ENCODE measurements at regions of chr2 and their contacts with region 1.

Region 1: GRCh38 chr2:118882709-118883210 is 35.3 kb upstream of the EN1 start:
- DNase-seq: peak; percentile 79
- H3K4me3 ChIP-seq: peak overlapping the region; percentile 4 to 41 (median 12)
- H3K27ac ChIP-seq: no peak overlapping the region
- H3K4me1 ChIP-seq: peaks cover 0 to 4% (median 0%) of the 10 kb centered on the region in 4 donors
- H3K27me3 ChIP-seq: peaks cover 26% of the 10 kb centered on the region
- CTCF ChIP-seq: peak; percentile 84 to 95 (median 89)
- EP300 ChIP-seq: no peak
- POLR2A ChIP-seq: no peak

Region 2: DNA sequence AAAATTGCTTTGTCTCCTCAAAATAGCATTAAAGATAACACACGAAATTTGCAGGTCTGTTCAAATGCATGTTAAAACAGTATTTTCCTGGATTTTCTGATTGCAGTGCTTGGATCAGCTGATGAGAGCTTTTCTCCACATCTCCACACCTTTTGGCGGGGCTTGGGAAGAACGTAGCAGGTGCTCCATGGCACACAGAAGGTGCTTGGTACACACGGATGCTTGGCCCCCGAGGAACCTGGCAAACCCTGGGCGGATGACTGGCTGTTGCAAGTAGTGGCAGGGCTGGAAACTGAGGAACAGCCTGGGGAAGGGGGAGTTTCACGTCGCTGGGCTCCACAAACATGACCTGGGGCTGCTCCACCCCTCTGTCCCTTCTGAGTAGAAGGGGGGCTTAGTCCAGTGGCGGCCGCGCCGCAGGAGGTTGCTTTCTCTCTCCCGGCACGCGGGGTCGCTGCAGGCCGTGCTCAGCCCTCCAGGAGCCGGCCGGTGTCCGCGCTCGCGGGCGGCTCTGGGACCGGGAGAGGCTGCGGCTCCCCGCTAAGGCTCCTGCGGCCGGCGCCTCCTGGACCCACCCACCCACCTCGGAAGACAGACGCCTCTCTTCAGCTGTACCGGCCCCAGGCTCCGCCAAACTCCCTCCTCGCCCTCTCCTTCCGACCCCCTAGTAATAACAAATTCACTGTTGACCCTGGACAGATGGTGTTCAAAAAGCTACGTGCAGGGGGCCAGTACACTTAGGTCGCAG is 128.6 kb after region 1 on chr2:
- in situ Hi-C with region 1: loop called in 2 of 4 experiments (anchors 10 to 25 kb)
- intact Hi-C with region 1: no loop called
- DNase-seq: peak; percentile 39
- H3K4me3 ChIP-seq: no peak overlapping the region
- H3K27ac ChIP-seq: no peak overlapping the region
- H3K4me1 ChIP-seq: peaks cover 0 to 4% (median 1%) of the 10 kb centered on the region in 4 donors
- H3K27me3 ChIP-seq: peaks cover 48% of the 10 kb centered on the region
- CTCF ChIP-seq: peak; percentile 26 to 49 (median 40)
- EP300 ChIP-seq: no peak
- POLR2A ChIP-seq: no peak

Region 3: DNA sequence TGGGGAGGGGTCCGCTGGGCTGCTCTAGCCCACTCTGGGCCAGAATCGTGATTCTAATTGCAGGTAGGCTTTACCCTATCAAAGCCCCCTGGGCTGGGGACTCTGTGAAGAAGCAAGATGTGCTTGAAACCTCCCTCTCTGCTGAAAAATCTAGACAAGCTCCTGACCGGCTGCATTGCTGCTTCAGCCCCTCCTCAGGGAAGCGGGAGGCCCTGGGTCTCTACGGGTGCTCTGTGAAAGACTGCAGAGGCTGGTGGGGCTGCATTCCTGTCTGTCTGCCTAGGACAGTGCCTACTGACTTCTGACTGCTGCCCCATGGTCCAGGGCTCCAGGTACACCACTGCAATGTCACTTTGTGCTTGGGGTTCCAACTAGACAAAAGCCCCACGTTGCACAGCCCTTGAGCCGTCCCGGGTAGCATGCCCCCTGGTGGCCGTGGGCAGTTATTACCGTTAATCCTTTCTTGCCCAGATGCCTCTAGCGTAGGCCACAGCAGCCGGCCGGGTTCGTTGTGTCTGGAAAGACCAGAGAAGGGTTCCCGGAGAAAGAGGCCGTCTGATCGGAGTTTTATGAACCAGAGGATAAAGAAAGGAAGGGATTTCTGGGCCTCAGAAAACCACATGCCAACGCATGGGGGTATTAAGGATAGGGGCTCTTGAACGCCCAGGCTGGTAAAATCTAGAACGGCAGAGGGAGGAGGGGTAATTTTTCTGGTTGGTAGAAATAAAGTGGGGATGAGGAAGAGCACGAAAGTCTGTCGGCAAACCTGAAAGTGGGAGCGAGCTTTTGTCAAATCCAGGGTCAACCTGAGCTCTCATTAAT is 291.7 kb after region 1 on chr2:
- in situ Hi-C with region 1: loop called (anchors 10 to 25 kb)
- intact Hi-C with region 1: no loop called
- DNase-seq: peak; percentile 52
- H3K4me3 ChIP-seq: no peak overlapping the region
- H3K27ac ChIP-seq: no peak overlapping the region
- H3K4me1 ChIP-seq: no peaks in the 10 kb centered on the region
- H3K27me3 ChIP-seq: no peaks in the 10 kb centered on the region
- CTCF ChIP-seq: peak; percentile 57 to 75 (median 71)
- EP300 ChIP-seq: no peak
- POLR2A ChIP-seq: no peak

Region 4: DNA sequence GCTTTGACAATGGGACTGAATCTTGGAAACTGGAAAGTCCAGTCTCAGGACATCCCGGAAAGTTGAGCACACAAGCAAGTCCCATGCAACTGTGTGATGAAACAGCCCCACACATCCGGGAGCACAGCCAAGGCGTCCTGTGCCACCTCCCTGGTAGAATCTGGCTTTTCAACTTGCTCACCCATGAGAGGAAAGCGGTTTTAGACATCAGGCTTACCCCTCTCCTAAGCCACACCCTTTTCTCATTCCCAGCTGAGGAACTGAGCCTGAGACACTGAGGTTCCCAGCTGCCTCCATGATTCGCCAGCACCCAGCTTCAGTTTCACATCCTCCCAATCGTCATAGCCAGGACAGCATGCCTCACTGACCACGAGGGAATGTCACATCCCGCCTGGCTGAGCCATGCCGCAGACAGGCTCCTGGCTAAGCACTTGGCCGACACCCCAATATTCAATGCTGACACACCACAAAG is 401.1 kb after region 1 on chr2:
- in situ Hi-C with region 1: loop called (anchors 10 to 25 kb)
- intact Hi-C with region 1: no loop called
- DNase-seq: peak; percentile 24
- H3K4me3 ChIP-seq: no peak overlapping the region
- H3K27ac ChIP-seq: peak overlapping the region in 1 of 4 donors; percentile 5
- H3K4me1 ChIP-seq: peaks cover 0 to 4% (median 0%) of the 10 kb centered on the region in 4 donors
- H3K27me3 ChIP-seq: no peaks in the 10 kb centered on the region
- CTCF ChIP-seq: no peak
- EP300 ChIP-seq: no peak
- POLR2A ChIP-seq: no peak

Region 5: DNA sequence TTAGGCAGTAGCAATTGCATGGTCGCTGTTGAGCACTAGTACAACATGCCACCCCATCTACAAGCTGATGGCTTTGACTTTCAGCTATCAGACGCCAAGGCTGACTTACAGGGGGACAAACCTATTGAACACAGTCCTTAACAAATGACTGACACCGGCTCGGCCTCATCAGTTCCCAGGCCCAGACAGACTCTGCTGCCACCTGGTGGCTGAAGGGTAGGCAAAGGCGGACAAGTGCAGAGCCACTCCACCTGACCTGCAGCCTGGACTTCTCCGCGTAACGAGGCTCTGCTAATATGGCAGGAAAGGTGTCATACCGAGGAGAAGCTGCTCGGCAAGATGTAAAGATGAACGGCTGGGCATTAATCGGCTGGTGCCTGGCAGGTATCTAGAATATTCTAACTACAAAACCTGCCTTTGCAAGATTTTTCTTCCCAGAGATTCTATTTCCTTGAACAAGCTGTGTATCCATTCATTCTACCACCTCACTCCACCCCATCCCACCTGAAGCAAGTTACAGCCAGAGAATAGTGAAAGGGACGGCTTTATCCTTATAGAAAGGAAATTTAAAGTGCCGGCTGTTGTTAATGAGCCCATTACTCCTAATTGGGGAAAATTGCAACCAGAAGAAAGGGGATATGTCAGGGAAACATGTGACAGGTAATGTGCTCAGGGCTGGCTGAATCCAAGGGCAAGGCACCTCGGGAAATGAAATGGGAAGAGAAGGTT is 408.3 kb after region 1 on chr2:
- in situ Hi-C with region 1: loop called (anchors 10 to 25 kb)
- intact Hi-C with region 1: loop called (anchors 10 kb)
- DNase-seq: peak; percentile 86
- H3K4me3 ChIP-seq: no peak overlapping the region
- H3K27ac ChIP-seq: no peak overlapping the region
- H3K4me1 ChIP-seq: peaks cover 0 to 10% (median 0%) of the 10 kb centered on the region in 4 donors
- H3K27me3 ChIP-seq: no peaks in the 10 kb centered on the region
- CTCF ChIP-seq: peak; percentile 52 to 72 (median 59)
- EP300 ChIP-seq: no peak
- POLR2A ChIP-seq: no peak

Region 6: DNA sequence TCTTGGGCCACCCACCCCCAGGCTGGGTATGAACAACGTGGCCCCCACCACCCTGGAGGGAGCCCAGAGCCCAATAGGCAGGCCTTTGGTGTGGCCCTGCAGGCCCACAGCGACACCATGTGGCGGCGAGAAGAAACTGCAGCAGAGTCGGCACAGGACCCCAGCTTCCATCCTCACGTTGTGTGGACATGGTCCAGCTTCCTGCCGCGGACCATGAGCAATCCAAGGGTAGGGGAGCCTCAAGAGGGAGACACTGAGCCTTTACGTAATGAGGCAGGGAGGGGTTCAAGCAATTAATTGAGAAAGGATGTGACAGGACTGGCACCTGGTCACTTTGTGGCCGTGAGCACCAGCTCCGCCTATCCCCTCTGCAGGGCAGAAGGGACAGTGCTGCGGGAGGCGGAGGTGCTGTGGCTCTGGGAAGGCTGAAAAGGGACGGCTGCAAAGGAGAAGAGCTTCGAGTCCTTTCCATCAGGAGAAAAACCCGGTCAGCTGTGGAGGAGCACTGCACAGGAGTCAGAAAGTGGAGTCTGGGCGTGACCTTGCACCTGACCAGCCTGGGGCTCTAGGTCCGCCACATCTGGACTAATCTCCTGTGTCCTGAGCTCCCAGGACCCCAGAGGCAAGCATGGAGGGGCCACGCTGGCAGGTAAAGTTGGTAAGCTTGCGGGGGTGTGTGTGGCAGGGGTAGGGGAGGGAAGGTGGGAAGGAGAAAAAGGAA is 593.7 kb after region 1 on chr2:
- in situ Hi-C with region 1: loop called in 1 of 4 experiments (anchors 25 kb)
- intact Hi-C with region 1: no loop called
- DNase-seq: peak; percentile 53
- H3K4me3 ChIP-seq: no peak overlapping the region
- H3K27ac ChIP-seq: no peak overlapping the region
- H3K4me1 ChIP-seq: peaks cover 0 to 4% (median 3%) of the 10 kb centered on the region in 4 donors
- H3K27me3 ChIP-seq: peaks cover 6% of the 10 kb centered on the region
- CTCF ChIP-seq: peak; percentile 93 to 99 (median 98)
- EP300 ChIP-seq: no peak
- POLR2A ChIP-seq: no peak